AG04450 (cell line): ENCODE measurements at regions of chr9 and their contacts with region 1.

Region 1: DNA sequence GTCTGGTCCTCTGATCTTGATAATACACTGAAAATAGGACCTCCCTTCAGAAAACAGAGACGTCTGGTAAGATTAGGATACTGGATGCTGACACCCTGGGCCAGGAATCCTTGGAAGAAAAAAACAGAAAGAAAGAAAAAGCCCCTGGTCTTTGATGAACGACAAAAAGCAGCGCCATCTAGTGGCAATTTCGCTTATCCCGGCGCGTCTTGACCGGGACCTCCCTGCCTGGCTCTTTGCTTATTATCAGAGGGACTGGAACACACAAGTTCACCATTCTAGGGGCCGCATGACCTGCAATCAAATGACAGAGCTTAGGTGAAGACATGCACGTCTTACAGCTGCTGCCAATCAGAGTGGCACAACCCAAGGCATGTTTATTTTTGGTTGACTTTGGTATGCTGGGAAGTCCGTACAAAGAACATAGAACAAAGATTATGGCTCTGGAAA is 114.9 kb upstream of the NFIB start:
- DNase-seq: peak; percentile 44
- H3K4me3 ChIP-seq: no peak overlapping the region
- H3K27ac ChIP-seq: no peak overlapping the region
- H3K27me3 ChIP-seq: peaks cover 26% of the 10 kb centered on the region
- CTCF ChIP-seq: peak; percentile 78

Region 2: GRCh38 chr9:13351778-13352386 is 1076.9 kb before region 1 on chr9:
- CTCF ChIA-PET with region 1: interaction called, 10 read pairs
- POLR2A ChIA-PET with region 1: no interaction called
- DNase-seq: peak; percentile 11
- H3K4me3 ChIP-seq: no peak overlapping the region
- H3K27ac ChIP-seq: no peak overlapping the region
- H3K27me3 ChIP-seq: no peaks in the 10 kb centered on the region
- CTCF ChIP-seq: peak; percentile 60

Region 3: GRCh38 chr9:13427587-13427986 is 1001.2 kb before region 1 on chr9:
- CTCF ChIA-PET with region 1: interaction called, 46 read pairs
- POLR2A ChIA-PET with region 1: no interaction called
- DNase-seq: peak; percentile 15
- H3K4me3 ChIP-seq: no peak overlapping the region
- H3K27ac ChIP-seq: no peak overlapping the region
- H3K27me3 ChIP-seq: no peaks in the 10 kb centered on the region
- CTCF ChIP-seq: peak; percentile 56

Region 4: GRCh38 chr9:14353222-14354056 is 75.4 kb before region 1 on chr9:
- CTCF ChIA-PET with region 1: interaction called, 16 read pairs
- POLR2A ChIA-PET with region 1: no interaction called
- DNase-seq: peak; percentile 30
- H3K4me3 ChIP-seq: no peak overlapping the region
- H3K27ac ChIP-seq: no peak overlapping the region
- H3K27me3 ChIP-seq: peaks cover 65% of the 10 kb centered on the region
- CTCF ChIP-seq: peak; percentile 94

Region 5: GRCh38 chr9:14362175-14362574 is 66.6 kb before region 1 on chr9:
- CTCF ChIA-PET with region 1: interaction called, 11 read pairs
- POLR2A ChIA-PET with region 1: no interaction called
- DNase-seq: no peak
- H3K4me3 ChIP-seq: no peak overlapping the region
- H3K27ac ChIP-seq: no peak overlapping the region
- H3K27me3 ChIP-seq: peaks cover 4% of the 10 kb centered on the region
- CTCF ChIP-seq: no peak

Region 6: GRCh38 chr9:14415947-14416346 is 12.9 kb before region 1 on chr9:
- CTCF ChIA-PET with region 1: interaction called, 94 read pairs
- POLR2A ChIA-PET with region 1: no interaction called
- DNase-seq: peak; percentile 70
- H3K4me3 ChIP-seq: no peak overlapping the region
- H3K27ac ChIP-seq: no peak overlapping the region
- H3K27me3 ChIP-seq: peaks cover 62% of the 10 kb centered on the region
- CTCF ChIP-seq: no peak

Region 7: DNA sequence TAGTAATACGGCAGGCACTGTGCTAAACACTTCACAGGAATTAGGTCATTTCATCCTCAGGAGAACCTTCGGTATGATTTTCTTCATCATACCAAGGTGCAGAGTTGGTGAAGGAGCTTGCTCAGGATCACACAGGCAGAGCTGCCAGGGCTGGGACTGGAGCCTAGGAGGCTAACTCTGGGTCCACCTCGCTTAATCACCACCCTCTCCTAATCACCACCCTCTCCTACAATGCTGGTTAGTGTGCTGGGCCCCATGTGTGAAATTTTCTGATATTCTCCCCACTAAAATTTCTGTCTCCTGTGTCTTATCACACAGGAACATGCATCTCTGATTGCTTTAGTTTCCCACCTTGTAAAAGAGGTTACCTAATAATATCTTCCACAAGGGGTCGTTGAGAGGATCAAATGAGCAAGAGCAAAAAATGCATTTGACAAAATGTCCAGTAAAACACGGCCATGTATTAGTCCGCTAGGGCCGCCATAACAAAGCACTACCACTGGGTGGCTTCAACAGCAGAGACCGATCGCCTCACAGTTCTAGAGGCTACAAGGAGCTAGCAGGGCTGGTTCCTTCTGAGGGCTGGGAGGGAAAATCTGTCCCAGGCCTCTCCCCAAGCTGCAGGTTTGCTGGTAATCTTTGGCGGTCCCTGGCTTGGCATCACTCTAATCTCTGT is 13.3 kb after region 1 on chr9:
- CTCF ChIA-PET with region 1: interaction called, 15 read pairs
- POLR2A ChIA-PET with region 1: no interaction called
- DNase-seq: no peak
- H3K4me3 ChIP-seq: no peak overlapping the region
- H3K27ac ChIP-seq: no peak overlapping the region
- H3K27me3 ChIP-seq: peaks cover 21% of the 10 kb centered on the region
- CTCF ChIP-seq: peak; percentile 33; the same call in 1 of the 2 replicates

Region 8: GRCh38 chr9:14790628-14791027 is 361.8 kb after region 1 on chr9:
- CTCF ChIA-PET with region 1: no interaction called
- POLR2A ChIA-PET with region 1: no interaction called
- DNase-seq: no peak
- H3K4me3 ChIP-seq: no peak overlapping the region
- H3K27ac ChIP-seq: no peak overlapping the region
- H3K27me3 ChIP-seq: no peaks in the 10 kb centered on the region
- CTCF ChIP-seq: no peak